Activated CD4-positive, alpha-beta T cell treated with anti-CD3 and anti-CD28 coated beads, Interleukin-2, amount 10 ng/mL, durations not matched to agents 24 days and 14 days (primary cell): ENCODE measurements at regions of chr3 and their contacts with region 1.

Region 1: GRCh38 chr3:113005611-113006010 is 14.8 kb downstream of the GTPBP8 start:
- DNase-seq: peak; percentile 77
- H3K4me3 Mint-ChIP-seq: peak overlapping the region; percentile 77
- H3K27ac Mint-ChIP-seq: peak overlapping the region; percentile 88
- H3K4me1 Mint-ChIP-seq: peaks cover 56% of the 10 kb centered on the region
- H3K27me3 Mint-ChIP-seq: no peaks in the 10 kb centered on the region

Region 2: GRCh38 chr3:112958811-112959560 is 46.6 kb before region 1 on chr3:
- intact Hi-C with region 1: loop called (anchors 1 kb)
- DNase-seq: no peak
- H3K4me3 Mint-ChIP-seq: peak overlapping the region; percentile 61
- H3K27ac Mint-ChIP-seq: peak overlapping the region; percentile 50
- H3K4me1 Mint-ChIP-seq: peaks cover 15% of the 10 kb centered on the region
- H3K27me3 Mint-ChIP-seq: no peaks in the 10 kb centered on the region

Region 3: DNA sequence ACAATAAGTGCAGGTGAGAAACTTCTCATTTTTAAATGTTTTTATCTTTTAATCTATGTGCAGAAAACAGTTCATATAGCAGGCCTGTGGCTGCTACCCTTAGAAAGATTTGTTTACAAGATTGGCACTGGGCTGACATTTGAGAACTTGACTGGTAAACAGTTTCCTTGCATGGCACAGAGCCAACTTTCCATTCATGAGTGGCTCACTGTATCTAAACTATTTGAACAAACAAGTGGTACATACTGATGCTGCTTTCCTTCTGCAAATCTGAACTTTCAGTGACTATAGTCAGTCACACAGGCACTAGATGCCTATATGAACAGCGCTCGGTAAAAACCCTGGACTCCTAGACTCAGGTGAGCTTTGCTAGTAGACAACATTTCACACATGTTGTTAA is 21.1 kb before region 1 on chr3:
- intact Hi-C with region 1: no loop called
- DNase-seq: no peak
- H3K4me3 Mint-ChIP-seq: no peak overlapping the region
- H3K27ac Mint-ChIP-seq: no peak overlapping the region
- H3K4me1 Mint-ChIP-seq: peaks cover 34% of the 10 kb centered on the region
- H3K27me3 Mint-ChIP-seq: peaks cover 6% of the 10 kb centered on the region